ENCODE measurements at regions of chr14 and their contacts with region 1.

Region 1: GRCh38 chr14:23286020-23286905 is at the start of gene HOMEZ:
- DNase-seq: peak; percentile 99
- ATAC-seq: peak; percentile 98
- H3K4me3 ChIP-seq: peak within 1 kb of the TSS; percentile 76
- H3K4me1 ChIP-seq: peaks cover 11% of the 10 kb centered on the region
- CTCF ChIP-seq: no peak
- total RNA-seq, gene HOMEZ: 15.3 to 18.3 (median 17.3) TPM

Region 2: GRCh38 chr14:23095196-23096108 is 190.8 kb before region 1 on chr14 and contains the start of gene C14orf119:
- intact Hi-C with region 1: loop called in 1 of 2 experiments (anchors 10 kb)
- DNase-seq: peak in 2 of 3 donors; percentile 96 to 100
- ATAC-seq: peak; percentile 93
- H3K4me3 ChIP-seq: peak within 1 kb of the TSS; percentile 88
- H3K4me1 ChIP-seq: peaks cover 30% of the 10 kb centered on the region
- CTCF ChIP-seq: no peak
- total RNA-seq, gene C14orf119: 46.6 to 48.3 (median 48.0) TPM

Measured in mucosa of descending colon (tissue), 3 donors.